Right cardiac atrium (tissue), 5 donors: ENCODE measurements at regions of chr17 and their contacts with region 1.

Region 1: GRCh38 chr17:35432176-35433074 is at the start of gene SLFN12:
- DNase-seq: peak; percentile 62 to 76 (median 65)
- ATAC-seq: peak; percentile 93 to 95
- H3K4me3 ChIP-seq: peak within 1 kb of the TSS; percentile 86
- H3K27ac ChIP-seq: peak within 1 kb of the TSS; percentile 97
- H3K4me1 ChIP-seq: peaks cover 4% of the 10 kb centered on the region
- H3K27me3 ChIP-seq: no peaks in the 10 kb centered on the region
- total RNA-seq, gene SLFN12: 3.6 to 6.0 (median 4.9) TPM

Region 2: DNA sequence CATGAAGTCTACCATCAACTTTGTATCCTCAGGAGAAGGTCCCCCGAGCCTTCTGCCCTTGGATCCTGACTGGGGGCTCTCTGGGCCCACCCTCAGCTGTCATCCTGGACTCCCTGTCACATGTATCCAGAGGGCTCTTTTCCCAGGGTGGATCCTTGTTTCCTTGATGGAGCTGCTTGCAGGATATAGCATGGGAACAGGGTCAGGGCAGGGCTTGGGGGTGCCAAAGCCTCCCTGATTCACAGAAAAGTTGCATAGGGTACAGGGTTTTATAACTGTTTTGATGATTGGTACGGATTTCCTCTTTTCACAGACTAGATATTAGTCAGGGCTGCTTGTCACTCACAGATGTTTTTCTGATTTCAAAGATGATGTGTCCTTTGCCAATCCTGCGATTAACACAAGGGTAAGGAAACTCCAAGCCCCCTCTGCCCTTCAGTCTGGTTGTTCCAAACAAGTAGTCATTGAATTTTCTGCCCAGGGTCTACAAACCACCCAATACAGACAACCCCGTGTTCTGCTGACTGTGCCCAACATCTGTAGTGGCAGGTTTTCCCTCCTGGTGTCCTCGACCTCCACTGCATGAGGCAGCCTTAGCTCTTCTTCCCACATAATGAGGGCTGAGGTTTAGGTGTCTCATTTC is 217.7 kb before region 1 on chr17:
- intact Hi-C with region 1: no loop called
- DNase-seq: no peak
- ATAC-seq: no peak
- H3K4me3 ChIP-seq: no peak overlapping the region
- H3K27ac ChIP-seq: peak overlapping the region; percentile 31
- H3K4me1 ChIP-seq: no peaks in the 10 kb centered on the region
- H3K27me3 ChIP-seq: no peaks in the 10 kb centered on the region

Region 3: GRCh38 chr17:35373534-35373983 is 58.9 kb before region 1 on chr17 and contains the start of gene SLFN11:
- intact Hi-C with region 1: loop called in 1 of 4 experiments (anchors 10 kb)
- DNase-seq: peak; percentile 92 to 96 (median 94)
- ATAC-seq: peak; percentile 97 to 98
- H3K4me3 ChIP-seq: peak within 1 kb of the TSS; percentile 96
- H3K27ac ChIP-seq: peak within 1 kb of the TSS; percentile 96
- H3K4me1 ChIP-seq: peaks cover 2% of the 10 kb centered on the region
- H3K27me3 ChIP-seq: no peaks in the 10 kb centered on the region
- total RNA-seq, gene SLFN11: 12.0 to 21.5 (median 19.0) TPM

Region 4: DNA sequence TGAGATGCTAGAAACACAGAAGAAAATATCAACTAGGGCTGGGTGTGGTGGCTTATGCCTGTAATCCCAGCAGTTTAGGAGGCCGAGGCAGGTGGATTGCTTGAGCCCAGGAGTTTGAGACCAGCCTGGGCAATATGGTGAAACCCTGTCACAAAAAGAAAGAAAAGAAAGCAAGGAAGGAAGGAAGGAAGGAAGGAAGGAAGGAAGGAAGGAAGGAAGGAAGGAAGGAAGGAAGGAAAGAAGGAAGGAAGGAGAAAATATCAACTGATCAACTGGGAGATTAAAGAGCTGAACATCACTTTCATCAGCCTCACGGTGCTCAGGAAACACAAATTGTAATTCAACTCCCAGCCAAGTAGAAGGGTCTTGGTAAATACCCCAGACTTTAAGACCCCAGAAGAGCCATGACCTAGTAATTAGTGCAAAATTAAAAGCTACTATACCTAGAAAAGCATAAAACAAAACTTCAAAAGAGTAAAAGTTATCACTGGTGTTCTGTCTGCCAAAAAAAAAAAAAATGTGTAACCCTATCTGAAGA is 43.9 kb after region 1 on chr17:
- intact Hi-C with region 1: no loop called
- DNase-seq: no peak
- ATAC-seq: no peak
- H3K4me3 ChIP-seq: no peak overlapping the region
- H3K27ac ChIP-seq: no peak overlapping the region
- H3K4me1 ChIP-seq: no peaks in the 10 kb centered on the region
- H3K27me3 ChIP-seq: no peaks in the 10 kb centered on the region

Region 5: DNA sequence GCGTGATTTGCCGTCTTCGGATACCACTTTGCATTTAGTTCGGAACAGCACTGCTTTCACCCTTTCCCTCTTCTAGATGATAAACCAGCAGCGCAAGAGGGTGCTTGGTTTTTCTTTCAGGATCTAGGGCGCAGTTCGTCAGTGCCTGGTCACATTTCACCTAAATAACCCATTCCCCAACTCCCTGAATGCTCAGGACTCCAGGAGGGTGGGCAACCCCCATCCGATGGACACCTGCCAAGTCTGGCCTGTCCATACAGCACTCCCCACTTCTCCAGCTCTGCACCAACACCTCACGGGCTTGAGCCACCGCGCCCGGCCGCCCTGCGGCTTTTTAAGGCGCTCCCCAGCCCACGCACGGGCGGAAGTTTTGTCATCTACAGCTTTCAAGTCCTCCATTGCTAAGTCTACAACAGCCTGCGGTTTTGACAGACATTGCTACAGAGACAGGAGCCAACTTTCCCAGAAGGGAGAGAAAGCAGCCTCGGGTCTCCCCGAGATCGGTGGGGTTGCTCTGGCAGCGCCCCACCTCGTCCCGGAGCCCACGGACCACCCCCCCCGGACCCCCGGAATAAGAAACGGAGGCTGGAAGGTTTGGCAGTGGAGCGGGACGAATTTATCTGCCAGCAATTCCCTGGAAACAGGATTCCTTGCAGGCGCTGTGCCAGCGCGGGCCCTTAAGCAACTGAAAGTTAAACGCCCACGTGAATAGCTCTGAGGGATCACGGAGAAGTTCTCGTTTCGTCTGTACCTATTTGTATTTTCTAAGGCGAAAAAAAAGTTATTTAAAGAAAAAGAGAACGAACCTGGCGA is 54.7 kb after region 1 on chr17:
- intact Hi-C with region 1: no loop called
- DNase-seq: peak; percentile 66 to 83 (median 77)
- ATAC-seq: peak; percentile 63 to 84
- H3K4me3 ChIP-seq: peak overlapping the region; percentile 82
- H3K27ac ChIP-seq: peak overlapping the region; percentile 5
- H3K4me1 ChIP-seq: peaks cover 5% of the 10 kb centered on the region
- H3K27me3 ChIP-seq: no peaks in the 10 kb centered on the region

Region 6: DNA sequence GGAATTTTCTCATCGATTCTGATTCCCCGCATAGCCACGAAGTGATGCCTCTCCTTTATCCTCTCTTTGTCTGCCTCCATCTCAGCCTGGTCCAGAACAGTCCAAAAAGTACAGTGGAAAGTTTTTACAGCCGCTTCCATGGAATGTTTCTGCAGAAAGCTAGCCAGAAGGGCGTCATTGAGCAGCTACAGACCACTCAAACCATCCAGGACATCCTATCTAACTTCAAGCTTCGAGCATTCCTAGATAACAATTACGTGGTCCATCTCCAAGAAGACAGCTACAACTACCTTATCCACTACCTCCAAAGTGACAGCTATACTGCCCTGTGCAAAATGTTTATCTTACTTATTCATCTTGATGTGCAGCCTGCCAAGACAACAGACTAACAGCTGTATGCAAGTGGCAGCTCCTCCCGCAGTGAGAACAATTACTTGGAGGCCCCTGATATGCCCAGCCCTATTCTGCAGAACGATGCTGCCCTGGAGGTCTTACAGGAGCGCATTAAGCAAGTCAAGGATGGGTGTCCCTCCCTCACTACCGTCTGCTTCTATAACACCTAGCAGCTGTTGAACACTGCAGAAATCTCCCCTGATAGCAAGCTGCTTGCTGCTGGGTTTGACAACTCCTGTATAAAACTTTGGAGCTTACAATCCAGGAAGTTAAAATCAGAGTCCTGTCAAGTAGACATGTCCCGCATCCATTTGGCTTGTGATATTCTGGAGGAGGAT is 66.2 kb after region 1 on chr17:
- intact Hi-C with region 1: no loop called
- DNase-seq: no peak
- ATAC-seq: no peak
- H3K4me3 ChIP-seq: peak overlapping the region; percentile 3
- H3K27ac ChIP-seq: no peak overlapping the region
- H3K4me1 ChIP-seq: no peaks in the 10 kb centered on the region
- H3K27me3 ChIP-seq: no peaks in the 10 kb centered on the region